Ovary (tissue), 10 donors: ENCODE measurements at regions of chr13 and their contacts with region 1.

Region 1: DNA sequence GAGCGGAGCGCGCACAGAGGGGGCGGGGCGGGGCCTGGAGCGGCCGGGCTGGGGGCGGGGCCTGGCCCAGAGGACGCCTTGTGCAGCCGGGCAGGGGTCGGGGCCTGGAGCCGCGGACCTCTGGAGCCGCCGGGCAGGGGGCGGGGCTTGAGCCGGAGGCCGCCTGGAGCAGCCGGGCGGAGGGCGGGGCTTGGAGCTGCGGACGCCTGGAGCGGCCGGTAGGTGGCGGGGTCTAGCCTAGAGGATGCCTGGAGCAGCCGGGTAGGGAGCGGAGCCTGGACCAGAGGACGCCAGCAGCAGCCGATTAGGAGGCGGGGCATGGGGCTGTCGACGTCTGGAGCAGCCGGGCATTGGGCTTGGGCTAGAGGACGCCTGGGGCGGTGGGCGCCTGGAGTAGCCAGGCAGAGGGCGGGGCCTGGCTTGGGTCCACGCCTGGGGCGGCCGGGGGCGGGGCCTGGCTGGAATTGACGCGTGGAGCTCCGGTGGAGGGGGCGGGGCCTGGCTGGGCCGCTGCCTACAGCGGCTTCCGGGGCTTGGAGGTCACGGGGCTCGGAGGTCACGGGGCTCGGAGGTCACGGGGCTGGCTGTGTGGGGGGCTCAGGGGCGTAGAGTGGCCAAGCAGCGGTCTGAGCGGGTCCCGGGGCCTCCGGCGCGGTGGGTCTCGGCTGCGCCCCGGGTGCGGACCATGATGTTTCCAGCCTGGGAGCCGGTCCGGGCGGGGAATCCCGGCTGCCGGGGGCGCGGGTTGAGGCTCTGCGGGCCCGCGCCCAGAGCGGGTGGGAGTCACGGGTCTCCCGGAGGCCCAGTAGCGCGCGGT is at the start of gene ANKRD10:
- DNase-seq: peak; percentile 99 to 100 (median 99)
- H3K4me3 ChIP-seq: peak within 1 kb of the TSS; percentile 100
- H3K27ac ChIP-seq: peak within 1 kb of the TSS; percentile 96 to 97
- H3K4me1 ChIP-seq: peaks cover 20% of the 10 kb centered on the region
- H3K27me3 ChIP-seq: no peaks in the 10 kb centered on the region
- CTCF ChIP-seq: peak; percentile 89 to 98 (median 95)
- EP300 ChIP-seq: peak; percentile 56
- POLR2A ChIP-seq: peak; percentile 67
- total RNA-seq, gene ANKRD10: 84.0 to 172 (median 133) TPM

Region 2: GRCh38 chr13:110615322-110616102 is 299.8 kb before region 1 on chr13 and contains the start of gene NAXD:
- intact Hi-C with region 1: loop called in 1 of 4 experiments (anchors 10 kb)
- DNase-seq: peak; percentile 93 to 94 (median 93)
- H3K4me3 ChIP-seq: peak within 1 kb of the TSS; percentile 81
- H3K27ac ChIP-seq: peak within 1 kb of the TSS; percentile 89
- H3K4me1 ChIP-seq: peaks cover 23% of the 10 kb centered on the region
- H3K27me3 ChIP-seq: no peaks in the 10 kb centered on the region
- CTCF ChIP-seq: no peak
- EP300 ChIP-seq: no peak
- POLR2A ChIP-seq: peak; percentile 55
- total RNA-seq, gene NAXD: 38.1 to 67.1 (median 56.9) TPM

Region 3: GRCh38 chr13:110715395-110716235 is 199.7 kb before region 1 on chr13:
- intact Hi-C with region 1: loop called in 3 of 4 experiments (anchors 2 to 5 kb)
- DNase-seq: peak; percentile 96 to 99 (median 97)
- H3K4me3 ChIP-seq: peak overlapping the region; percentile 90
- H3K27ac ChIP-seq: peak overlapping the region; percentile 96 to 99
- H3K4me1 ChIP-seq: peaks cover 3% of the 10 kb centered on the region
- H3K27me3 ChIP-seq: no peaks in the 10 kb centered on the region
- CTCF ChIP-seq: peak in 2 of 3 donors; percentile 43
- EP300 ChIP-seq: peak; percentile 70
- POLR2A ChIP-seq: peak; percentile 79

Region 4: DNA sequence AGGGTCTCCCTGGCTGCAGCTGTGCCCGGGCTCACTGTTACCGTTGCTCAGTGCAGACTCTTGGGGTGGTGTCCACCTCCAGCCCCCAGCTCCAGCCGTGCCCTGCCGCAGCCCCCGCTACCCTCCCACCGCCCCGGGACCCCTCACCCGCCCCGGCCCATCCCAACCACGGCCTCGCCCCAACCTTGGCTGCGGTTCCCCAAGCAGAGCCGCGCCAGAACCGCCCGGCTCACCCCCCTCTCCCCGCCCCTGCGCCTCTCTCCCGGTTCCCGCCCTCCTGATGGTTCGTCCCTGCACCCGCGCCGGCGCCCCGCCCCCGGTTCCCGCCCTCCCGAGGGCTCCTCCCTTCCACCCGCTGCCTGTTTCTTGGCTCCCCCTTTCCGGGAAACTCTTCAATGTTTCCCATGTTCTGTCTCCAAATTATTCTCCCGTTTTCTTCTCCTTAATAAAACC is 40.7 kb before region 1 on chr13:
- intact Hi-C with region 1: loop called in 1 of 4 experiments (anchors 5 kb)
- DNase-seq: peak; percentile 86 to 93 (median 89)
- H3K4me3 ChIP-seq: peak overlapping the region; percentile 32
- H3K27ac ChIP-seq: no peak overlapping the region
- H3K4me1 ChIP-seq: peaks cover 9% of the 10 kb centered on the region
- H3K27me3 ChIP-seq: no peaks in the 10 kb centered on the region
- CTCF ChIP-seq: no peak
- EP300 ChIP-seq: no peak
- POLR2A ChIP-seq: no peak

Region 5: GRCh38 chr13:111153279-111153976 is 238.2 kb after region 1 on chr13:
- intact Hi-C with region 1: loop called in 1 of 4 experiments (anchors 5 kb)
- DNase-seq: peak; percentile 92 to 97 (median 94)
- H3K4me3 ChIP-seq: peak overlapping the region; percentile 96
- H3K27ac ChIP-seq: peak overlapping the region; percentile 87 to 97
- H3K4me1 ChIP-seq: peaks cover 7% of the 10 kb centered on the region
- H3K27me3 ChIP-seq: no peaks in the 10 kb centered on the region
- CTCF ChIP-seq: peak in 2 of 3 donors; percentile 10 to 41
- EP300 ChIP-seq: peak; percentile 28
- POLR2A ChIP-seq: peak; percentile 94

Region 6: GRCh38 chr13:111228262-111229144 is 313.2 kb after region 1 on chr13:
- intact Hi-C with region 1: loop called in 1 of 4 experiments (anchors 10 kb)
- DNase-seq: no peak
- H3K4me3 ChIP-seq: no peak overlapping the region
- H3K27ac ChIP-seq: no peak overlapping the region
- H3K4me1 ChIP-seq: peaks cover 6% of the 10 kb centered on the region
- H3K27me3 ChIP-seq: no peaks in the 10 kb centered on the region
- CTCF ChIP-seq: no peak
- EP300 ChIP-seq: no peak
- POLR2A ChIP-seq: no peak